A549 (cell line): ENCODE measurements at regions of chr17 and their contacts with region 1.

Region 1: GRCh38 chr17:48228721-48229120 is 121.2 kb downstream of the SNX11 start:
- DNase-seq: no peak
- ATAC-seq: peak; percentile 70 to 74; a peak in 5 of 6 replicates
- H3K4me3 ChIP-seq: no peak overlapping the region
- H3K27ac ChIP-seq: no peak overlapping the region
- H3K4me1 ChIP-seq: no peaks in the 10 kb centered on the region
- CTCF ChIP-seq: no peak
- EP300 ChIP-seq: no peak
- POLR2A ChIP-seq: no peak
- RAD21 ChIP-seq: no peak

Region 2: DNA sequence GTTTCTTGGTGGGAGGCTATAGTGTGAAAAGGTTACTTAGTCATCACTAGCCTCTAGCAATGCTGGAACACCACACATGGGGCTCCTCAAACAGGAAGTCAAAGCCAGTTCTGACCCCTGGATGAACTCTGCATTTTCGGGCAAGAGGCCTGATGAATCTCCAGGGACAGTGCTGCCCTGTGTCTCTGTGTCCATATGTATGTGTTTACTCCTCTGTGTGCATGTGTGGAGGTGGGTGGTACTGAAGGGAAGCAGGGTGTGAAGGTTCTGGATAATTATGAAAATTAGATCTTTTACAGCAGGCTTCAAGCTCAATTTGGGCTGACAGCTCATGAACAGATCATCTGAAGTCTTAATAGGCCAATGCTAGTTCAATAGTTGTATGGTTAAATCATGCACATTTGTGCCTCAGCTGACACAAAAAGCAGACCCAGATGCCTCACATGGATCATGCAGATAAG is 12.4 kb after region 1 on chr17:
- CTCF ChIA-PET with region 1: interaction called, 10 read pairs
- POLR2A ChIA-PET with region 1: interaction called, 3 read pairs
- DNase-seq: peak; percentile 74 to 90
- ATAC-seq: peak; percentile 50 to 73; a peak in 5 of 6 replicates
- H3K4me3 ChIP-seq: no peak overlapping the region
- H3K27ac ChIP-seq: peak overlapping the region; percentile 62 to 77
- H3K4me1 ChIP-seq: peaks cover 82% of the 10 kb centered on the region
- CTCF ChIP-seq: no peak
- EP300 ChIP-seq: peak in 1 of 2 experiments; percentile 41; a peak in 1 of 5 replicates
- POLR2A ChIP-seq: no peak
- RAD21 ChIP-seq: no peak